ENCODE measurements at regions of chr3 and their contacts with region 1.

Region 1: DNA sequence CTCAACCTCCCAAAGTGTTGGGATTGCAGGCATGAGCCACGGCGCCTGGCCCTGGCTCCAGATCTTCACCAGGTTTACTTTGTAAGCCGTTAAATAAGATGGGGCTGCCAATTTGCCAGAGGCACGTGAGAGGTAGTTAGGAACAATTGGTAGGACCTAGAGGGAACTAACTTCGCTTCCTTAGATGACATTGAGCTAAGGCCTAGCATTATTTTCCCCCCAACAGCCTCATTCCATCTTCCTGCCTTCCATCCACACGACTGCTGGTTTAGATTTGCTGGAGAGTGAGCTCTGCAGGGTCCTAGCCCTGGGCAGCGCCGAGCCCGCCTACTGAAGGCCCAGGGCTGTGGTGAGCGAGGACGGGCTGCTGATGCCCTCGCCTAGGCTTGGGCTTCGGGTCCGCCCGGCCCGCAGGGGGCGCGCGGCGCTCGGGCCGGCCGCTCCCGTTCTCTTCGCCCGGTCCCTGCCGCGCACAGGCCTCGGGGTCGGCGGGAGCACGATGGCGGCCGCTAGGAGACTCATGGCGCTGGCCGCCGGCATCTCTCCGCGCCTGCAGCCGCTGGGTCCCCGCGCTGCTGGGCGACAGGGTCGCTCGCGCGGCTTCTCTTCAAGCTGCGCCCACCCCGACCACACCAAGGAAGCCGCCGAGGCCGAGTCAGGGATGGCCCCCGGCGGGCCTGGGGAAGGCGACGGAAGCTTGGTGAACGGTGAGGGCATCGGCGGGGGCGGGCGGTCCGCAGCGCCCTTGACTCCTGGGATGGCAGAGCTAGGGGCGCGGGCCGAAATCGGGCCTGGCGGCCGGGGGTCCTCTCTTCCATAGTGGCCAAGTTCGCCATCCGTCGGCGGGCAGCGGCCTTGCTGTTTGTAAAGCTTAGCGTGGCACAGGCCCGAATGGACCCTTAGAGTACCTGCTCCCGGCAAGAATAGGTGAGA is 21.9 kb downstream of the DHX30 start:
- H3K4me3 ChIP-seq: peak overlapping the region; percentile 83
- H3K27ac ChIP-seq: peak overlapping the region; percentile 80
- H3K4me1 ChIP-seq: no peaks in the 10 kb centered on the region
- CTCF ChIP-seq: peak; percentile 75

Region 2: DNA sequence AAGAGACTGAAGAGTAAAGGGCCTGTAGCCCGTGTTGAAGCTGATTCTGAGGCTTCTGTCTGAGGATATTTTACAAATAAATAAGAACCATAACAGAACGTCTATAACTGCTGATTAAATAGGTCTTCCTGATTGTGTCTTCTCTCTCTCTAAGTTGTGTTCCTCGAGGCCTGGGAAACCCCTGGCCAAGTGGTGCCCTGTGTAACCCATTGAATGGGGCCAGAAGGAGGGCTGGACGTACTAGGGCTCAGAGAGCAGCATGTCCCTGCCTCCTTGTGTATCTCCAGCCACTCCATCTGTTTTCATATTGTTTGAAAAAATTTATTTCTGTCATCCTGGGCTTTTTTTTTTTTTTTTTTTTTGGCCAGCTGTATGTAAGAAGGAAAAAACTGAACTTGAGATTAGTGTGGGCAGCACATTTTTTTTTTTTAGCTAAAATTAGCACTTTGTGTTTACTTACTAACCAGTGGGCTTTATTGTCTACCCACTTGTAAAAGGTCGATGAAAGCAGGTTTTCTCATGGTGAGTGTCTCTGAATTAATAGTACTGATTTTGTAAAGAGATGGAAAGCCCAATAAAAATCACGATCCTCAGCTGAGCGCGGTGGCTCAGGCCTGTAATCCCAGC is 11.1 kb before region 1 on chr3:
- CTCF ChIA-PET with region 1: interaction called, 15 read pairs
- POLR2A ChIA-PET with region 1: interaction called, 4 read pairs
- H3K4me3 ChIP-seq: no peak overlapping the region
- H3K27ac ChIP-seq: no peak overlapping the region
- H3K4me1 ChIP-seq: no peaks in the 10 kb centered on the region
- CTCF ChIP-seq: no peak